Common myeloid progenitor, CD34-positive (primary cell): ENCODE measurements at regions of chr19 and their contacts with region 1.

Region 1: DNA sequence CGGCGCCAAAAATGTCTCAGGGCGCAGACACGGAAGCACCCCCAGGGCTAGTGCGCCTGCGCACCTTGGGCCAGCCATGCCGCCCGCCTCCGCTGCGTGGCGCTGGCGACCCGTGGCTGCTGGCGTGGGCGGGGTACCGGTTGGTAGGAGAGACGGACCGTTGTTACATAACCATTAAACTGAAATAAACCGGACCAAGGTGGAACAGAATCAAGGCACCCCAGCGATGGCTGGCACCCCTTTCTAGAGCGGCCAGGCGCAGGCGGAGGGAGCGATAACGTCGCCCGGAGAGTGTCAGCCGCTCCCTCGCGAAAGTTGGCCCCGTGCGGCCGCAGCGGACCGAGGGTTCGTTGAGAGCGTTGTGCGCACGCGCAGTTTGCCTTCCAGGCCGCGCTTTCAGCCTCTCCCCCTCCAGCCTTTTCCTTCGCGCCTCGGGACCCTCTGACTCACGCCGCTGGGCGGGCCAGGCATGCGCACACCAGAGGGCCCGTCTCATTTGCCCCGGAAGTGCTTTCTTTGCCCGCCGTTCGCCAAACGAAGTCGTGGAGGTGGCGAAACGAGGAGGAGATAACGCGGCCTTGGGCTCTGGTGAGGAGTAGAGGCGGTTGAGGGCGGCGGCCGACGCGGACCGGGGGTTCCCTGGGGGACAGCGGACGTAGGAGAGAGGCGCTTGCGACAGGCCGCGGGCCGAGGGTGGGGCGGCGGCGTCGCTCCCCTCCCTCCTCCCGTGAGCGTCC is at the starts of genes PLEKHJ1 and SF3A2:
- DNase-seq: peak; percentile 97 to 99 (median 98)
- H3K4me3 ChIP-seq: peak within 1 kb of the TSS; percentile 59 to 86 (median 79)
- H3K27ac ChIP-seq: peak within 1 kb of the TSS; percentile 85 to 94
- H3K4me1 ChIP-seq: peaks cover 0 to 64% (median 62%) of the 10 kb centered on the region in 4 experiments
- H3K27me3 ChIP-seq: no peaks in the 10 kb centered on the region

Region 2: GRCh38 chr19:2207991-2208860 is 28.3 kb before region 1 on chr19:
- CTCF ChIA-PET with region 1: no interaction called
- POLR2A ChIA-PET with region 1: no interaction called
- DNase-seq: peak in 2 of 3 donors; percentile 14 to 25
- H3K4me3 ChIP-seq: no peak overlapping the region
- H3K27ac ChIP-seq: no peak overlapping the region
- H3K4me1 ChIP-seq: no peaks in the 10 kb centered on the region
- H3K27me3 ChIP-seq: no peaks in the 10 kb centered on the region

Region 3: DNA sequence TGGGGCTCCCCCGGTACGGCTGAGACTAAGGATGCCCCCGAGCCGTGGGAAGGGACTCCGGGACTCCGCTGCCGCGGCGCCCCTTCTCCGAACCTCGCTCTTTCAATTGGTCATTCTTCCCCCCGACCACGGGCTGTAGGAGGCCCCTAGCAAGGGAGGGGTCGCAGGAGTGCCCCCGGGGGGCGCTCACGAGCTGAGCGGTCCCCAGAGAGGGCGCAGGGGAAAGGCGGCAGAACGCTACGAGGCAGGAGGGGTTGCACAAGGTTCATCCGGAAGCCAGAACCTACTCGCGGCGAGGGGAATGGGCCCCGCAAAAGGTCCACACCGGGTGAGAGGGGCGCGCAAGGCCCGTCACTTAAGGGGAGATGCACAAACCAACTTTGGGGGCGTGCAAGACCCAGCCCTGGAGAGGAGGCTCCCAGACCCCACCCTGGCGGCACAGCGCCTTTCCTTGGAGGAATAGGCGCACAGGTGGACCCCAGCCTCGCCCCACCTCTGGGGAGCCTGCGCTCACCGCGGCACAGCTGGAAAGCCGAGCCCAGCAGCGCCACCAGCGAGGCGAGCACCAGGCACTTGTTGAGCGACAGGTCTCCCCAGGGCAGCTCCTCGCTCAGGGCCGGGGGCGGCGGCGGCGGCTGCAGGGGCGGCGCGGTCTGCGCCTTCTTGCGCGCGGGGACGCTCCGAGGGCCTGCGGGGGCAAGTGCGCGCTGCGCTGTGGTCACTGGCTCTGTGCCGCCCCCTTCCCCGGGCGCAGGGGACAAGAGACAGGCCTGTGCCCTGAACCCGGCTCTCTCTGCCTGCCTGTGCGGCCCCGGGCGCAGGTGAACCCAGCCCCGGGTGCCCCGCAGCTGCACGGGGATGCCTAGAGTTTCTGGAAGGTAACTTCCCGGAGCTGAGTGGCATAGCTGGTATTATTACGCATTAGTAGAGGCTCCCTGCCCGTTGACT is 16.9 kb after region 1 on chr19:
- CTCF ChIA-PET with region 1: interaction called, 52 read pairs
- POLR2A ChIA-PET with region 1: interaction called, 7 read pairs
- DNase-seq: peak; percentile 46 to 71 (median 68)
- H3K4me3 ChIP-seq: peak overlapping the region in 6 of 7 experiments; percentile 38 to 73 (median 59)
- H3K27ac ChIP-seq: no peak overlapping the region
- H3K4me1 ChIP-seq: peaks cover 0 to 49% (median 39%) of the 10 kb centered on the region in 4 experiments
- H3K27me3 ChIP-seq: peaks cover 0 to 53% (median 7%) of the 10 kb centered on the region in 5 experiments

Region 4: DNA sequence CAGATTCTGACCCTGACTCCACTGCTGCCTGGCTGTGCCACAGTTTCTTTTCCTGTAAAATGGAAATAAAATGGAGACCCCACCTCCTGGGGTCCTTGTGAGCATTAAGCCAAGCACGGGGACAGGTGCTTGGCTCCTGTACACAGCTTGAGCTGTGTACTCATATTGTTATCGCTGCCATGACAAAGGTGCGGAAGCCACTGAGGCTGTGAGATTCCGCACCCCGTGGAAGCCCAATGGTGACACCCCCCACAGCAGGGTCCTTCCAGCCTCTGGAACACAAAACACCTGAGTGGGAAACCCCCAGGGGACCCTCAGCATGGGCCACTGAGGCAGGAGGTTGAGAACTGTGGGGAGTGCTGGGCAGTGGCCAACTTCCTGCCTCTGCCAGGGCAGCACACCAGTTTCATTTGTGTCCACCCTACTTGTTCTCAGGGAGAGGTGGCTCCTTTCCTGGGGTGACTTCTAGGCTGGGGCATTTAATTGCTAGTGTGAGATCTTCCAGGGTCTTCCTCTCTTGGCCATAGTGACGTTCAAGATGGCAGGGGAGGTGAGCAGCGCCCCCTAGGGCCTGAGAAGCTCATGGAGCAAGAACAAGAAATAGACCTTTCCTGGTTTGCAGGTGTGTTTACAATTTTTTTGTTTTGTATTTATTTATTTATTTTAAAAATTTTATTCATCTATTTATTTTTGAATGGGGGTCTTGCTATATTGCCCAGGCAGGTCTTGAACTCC is 25.1 kb after region 1 on chr19:
- CTCF ChIA-PET with region 1: interaction called, 13 read pairs
- POLR2A ChIA-PET with region 1: interaction called, 4 read pairs
- DNase-seq: peak; percentile 44 to 65 (median 63)
- H3K4me3 ChIP-seq: no peak overlapping the region
- H3K27ac ChIP-seq: no peak overlapping the region
- H3K4me1 ChIP-seq: peaks cover 0 to 44% (median 35%) of the 10 kb centered on the region in 4 experiments
- H3K27me3 ChIP-seq: no peaks in the 10 kb centered on the region

Region 5: GRCh38 chr19:2273356-2274184 is 37.1 kb after region 1 on chr19:
- CTCF ChIA-PET with region 1: interaction called, 44 read pairs
- POLR2A ChIA-PET with region 1: interaction called, 6 read pairs
- DNase-seq: peak; percentile 77 to 82 (median 78)
- H3K4me3 ChIP-seq: peak overlapping the region in 4 of 7 experiments; percentile 28 to 54 (median 44)
- H3K27ac ChIP-seq: peak overlapping the region in 1 of 2 experiments; percentile 58
- H3K4me1 ChIP-seq: peaks cover 5 to 44% (median 40%) of the 10 kb centered on the region in 4 experiments
- H3K27me3 ChIP-seq: no peaks in the 10 kb centered on the region